T-cell (primary cell): ENCODE measurements at regions of chr2 and their contacts with region 1.

Region 1: GRCh38 chr2:105369747-105370690 is 28.8 kb downstream of the FHL2 start:
- DNase-seq: peak; percentile 70 to 92 (median 83)
- ATAC-seq: peak; percentile 96 to 99 (median 98)
- H3K4me3 ChIP-seq: no peak overlapping the region
- H3K4me3 Mint-ChIP-seq: peak overlapping the region in 2 of 3 donors; percentile 21 to 48
- H3K27ac ChIP-seq: no peak overlapping the region
- H3K27ac Mint-ChIP-seq: peak overlapping the region in 1 of 2 donors; percentile 36
- H3K4me1 ChIP-seq: peaks cover 0 to 25% of the 10 kb centered on the region in 2 experiments
- H3K4me1 Mint-ChIP-seq: peaks cover 13 to 22% (median 17%) of the 10 kb centered on the region in 3 donors
- H3K27me3 ChIP-seq: no peaks in the 10 kb centered on the region
- H3K27me3 Mint-ChIP-seq: no peaks in the 10 kb centered on the region

Region 2: DNA sequence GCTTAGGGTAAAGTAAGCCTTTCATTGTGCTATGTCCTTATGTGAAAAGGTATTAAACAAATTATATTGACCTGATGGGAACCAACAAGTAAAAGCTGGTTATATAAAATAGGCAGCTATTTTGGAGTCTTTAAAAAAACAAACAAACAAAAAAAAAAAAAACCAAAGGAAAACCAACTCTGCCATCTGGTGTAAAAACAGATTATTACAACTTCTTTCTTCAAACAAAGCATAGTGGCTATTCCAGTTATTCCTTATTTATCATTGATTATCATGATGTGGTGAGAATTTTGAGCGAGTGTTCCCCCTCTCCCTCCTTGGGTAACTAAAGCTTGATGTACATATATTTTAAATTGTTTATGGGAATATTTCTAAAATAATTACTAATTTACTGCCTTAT is 151.2 kb after region 1 on chr2:
- CTCF ChIA-PET with region 1: interaction called, 10 to 17 read pairs
- POLR2A ChIA-PET with region 1: no interaction called
- DNase-seq: peak in 1 of 35 experiments; percentile 53
- ATAC-seq: no peak
- H3K4me3 ChIP-seq: no peak overlapping the region
- H3K4me3 Mint-ChIP-seq: no peak overlapping the region
- H3K27ac ChIP-seq: no peak overlapping the region
- H3K27ac Mint-ChIP-seq: no peak overlapping the region
- H3K4me1 ChIP-seq: no peaks in the 10 kb centered on the region
- H3K4me1 Mint-ChIP-seq: no peaks in the 10 kb centered on the region
- H3K27me3 ChIP-seq: peaks cover 0 to 24% of the 10 kb centered on the region in 2 experiments
- H3K27me3 Mint-ChIP-seq: peaks cover 2 to 3% of the 10 kb centered on the region in 2 donors